GM10248 (cell line): ENCODE measurements at regions of chr20 and their contacts with region 1.

Region 1: GRCh38 chr20:40689943-40690835 is 1.2 kb upstream of the MAFB start:
- DNase-seq: peak; percentile 83
- CTCF ChIP-seq: peak; percentile 91

Region 2: DNA sequence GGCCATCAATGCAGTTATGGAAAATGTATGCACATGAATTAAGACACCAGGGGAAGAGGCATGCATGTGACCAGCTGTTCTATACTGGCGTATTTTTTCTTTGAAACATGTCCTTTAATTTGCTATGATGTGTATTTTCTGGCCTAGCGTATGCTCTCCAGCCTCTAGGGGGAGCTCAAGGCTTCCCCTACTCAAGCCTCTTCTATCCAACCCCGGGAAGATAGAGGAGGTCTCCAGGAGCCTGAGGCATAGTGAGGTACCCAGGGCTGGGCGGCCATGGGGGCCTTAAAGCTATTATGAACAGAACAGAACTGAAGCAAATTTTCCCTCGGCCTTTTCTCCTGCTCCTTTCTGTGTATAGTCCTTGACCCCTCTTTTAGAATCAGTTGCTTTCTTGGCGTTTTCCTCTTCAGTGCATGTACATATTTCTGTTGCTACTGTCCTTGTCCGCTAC is 530.1 kb before region 1 on chr20:
- CTCF ChIA-PET with region 1: interaction called, 13 read pairs
- POLR2A ChIA-PET with region 1: no interaction called
- DNase-seq: peak; percentile 24
- CTCF ChIP-seq: peak; percentile 50

Region 3: DNA sequence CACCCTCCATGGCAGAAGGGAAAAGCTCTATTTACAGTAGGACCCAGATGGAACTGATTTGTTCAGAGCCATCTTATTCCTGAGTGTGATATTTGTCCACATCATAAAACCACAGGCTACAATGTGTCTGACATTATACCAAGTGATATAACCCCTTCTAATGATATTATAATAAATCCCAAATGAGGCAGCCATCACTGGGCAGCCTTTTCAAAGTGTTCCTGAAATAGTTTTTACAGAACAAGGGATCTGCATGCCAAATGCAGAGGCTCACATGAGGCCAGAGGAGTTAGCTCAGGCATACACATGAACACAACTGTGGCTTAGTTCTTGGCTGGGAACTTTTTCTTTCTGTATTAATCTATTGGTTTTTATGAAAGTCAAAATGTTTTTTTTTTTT is 208.9 kb before region 1 on chr20:
- CTCF ChIA-PET with region 1: no interaction called
- POLR2A ChIA-PET with region 1: no interaction called
- DNase-seq: no peak
- CTCF ChIP-seq: no peak

Region 4: GRCh38 chr20:40706977-40707582 is 16.9 kb after region 1 on chr20:
- CTCF ChIA-PET with region 1: interaction called, 27 read pairs
- POLR2A ChIA-PET with region 1: no interaction called
- DNase-seq: no peak
- CTCF ChIP-seq: no peak

Region 5: DNA sequence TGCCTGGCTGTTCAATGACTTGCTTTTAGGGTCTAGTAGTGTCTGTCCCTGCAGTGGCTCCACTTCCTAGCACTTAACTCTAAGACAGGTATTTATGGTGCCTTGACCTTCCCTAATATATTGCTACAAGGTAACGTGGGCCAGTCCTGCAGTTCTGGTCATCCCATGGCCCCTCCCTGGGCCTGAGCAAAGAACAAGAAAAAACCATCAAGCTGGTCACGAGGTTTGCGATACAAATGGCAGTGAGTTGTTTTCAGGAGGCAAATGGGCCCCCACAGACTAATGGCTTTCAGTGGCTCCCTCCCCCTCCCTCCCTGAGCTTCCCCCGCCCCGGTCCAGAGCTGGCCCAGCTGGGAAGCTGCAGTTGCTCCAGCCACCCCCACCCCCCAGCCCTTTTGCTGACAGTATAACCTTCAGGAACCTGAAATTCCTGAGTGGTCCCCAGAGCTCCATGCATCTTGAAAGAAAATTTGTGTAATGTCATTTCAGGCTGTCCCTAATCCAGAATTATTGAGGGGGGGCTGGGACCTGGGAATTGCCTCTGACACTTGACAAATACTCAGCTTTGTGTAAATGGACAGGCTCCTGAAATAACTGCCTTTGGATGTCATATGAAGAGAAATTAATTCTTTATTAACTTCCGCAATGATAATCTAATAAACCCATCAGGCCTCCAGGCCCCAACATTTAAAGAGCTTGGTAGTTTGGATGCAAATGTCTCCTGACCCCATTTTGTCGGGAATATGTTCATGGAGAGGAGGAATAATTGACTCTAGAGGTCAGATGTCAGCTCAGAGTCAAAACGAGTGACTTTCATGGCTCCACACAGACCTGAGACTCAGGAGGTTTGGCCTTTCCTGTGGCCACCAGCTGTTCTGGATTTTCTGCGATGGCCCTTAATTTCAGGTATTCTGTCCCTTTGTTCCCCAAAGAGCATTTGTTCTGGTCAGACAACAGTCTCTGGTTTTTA is 185.2 kb after region 1 on chr20:
- CTCF ChIA-PET with region 1: no interaction called
- POLR2A ChIA-PET with region 1: no interaction called
- DNase-seq: no peak
- CTCF ChIP-seq: no peak